ENCODE measurements at regions of chr11 and their contacts with region 1.

Region 1: GRCh38 chr11:9250139-9250582 is 15.0 kb downstream of the DENND5A start:
- DNase-seq: no peak
- ATAC-seq: no peak
- H3K4me3 ChIP-seq: no peak overlapping the region
- H3K27ac ChIP-seq: peak overlapping the region in 4 of 12 donors; percentile 0 to 79 (median 32)
- H3K4me1 ChIP-seq: peaks cover 6 to 76% (median 42%) of the 10 kb centered on the region in 12 donors
- H3K27me3 ChIP-seq: no peaks in the 10 kb centered on the region
- CTCF ChIP-seq: no peak
- POLR2A ChIP-seq: no peak

Region 2: DNA sequence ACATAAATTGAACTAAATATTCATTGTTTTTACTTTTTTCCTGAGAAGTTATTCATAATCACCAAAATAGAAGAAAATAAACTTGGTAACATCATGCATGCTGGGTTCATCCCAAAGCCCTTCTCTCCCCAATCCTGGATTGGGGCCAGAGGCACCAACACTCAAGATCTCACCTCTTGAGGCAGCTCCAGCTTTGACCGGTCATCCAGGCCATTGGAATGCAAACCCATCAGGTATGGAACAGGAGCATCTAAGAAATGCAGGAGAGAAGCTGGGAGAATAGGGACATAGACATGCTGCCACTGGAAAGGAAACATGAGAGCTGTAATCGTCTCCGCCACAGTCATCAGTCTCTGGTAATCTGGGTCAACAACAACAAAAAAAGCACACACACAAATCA is 56.8 kb before region 1 on chr11:
- intact Hi-C with region 1: no loop called
- DNase-seq: no peak
- ATAC-seq: no peak
- H3K4me3 ChIP-seq: no peak overlapping the region
- H3K27ac ChIP-seq: no peak overlapping the region
- H3K4me1 ChIP-seq: peaks cover 0 to 10% (median 0%) of the 10 kb centered on the region in 12 donors
- H3K27me3 ChIP-seq: no peaks in the 10 kb centered on the region
- CTCF ChIP-seq: no peak
- POLR2A ChIP-seq: no peak

Region 3: GRCh38 chr11:9219572-9219971 is 30.6 kb before region 1 on chr11:
- intact Hi-C with region 1: loop called in 1 of 10 experiments (anchors 5 kb)
- DNase-seq: no peak
- ATAC-seq: peak in 2 of 4 donors; percentile 55 to 60
- H3K4me3 ChIP-seq: no peak overlapping the region
- H3K27ac ChIP-seq: peak overlapping the region in 7 of 12 donors; percentile 4 to 74 (median 47)
- H3K4me1 ChIP-seq: peaks cover 0 to 47% (median 15%) of the 10 kb centered on the region in 12 donors
- H3K27me3 ChIP-seq: no peaks in the 10 kb centered on the region
- CTCF ChIP-seq: no peak
- POLR2A ChIP-seq: no peak

Region 4: GRCh38 chr11:9498457-9499078 is 248.4 kb after region 1 on chr11:
- intact Hi-C with region 1: no loop called
- DNase-seq: no peak
- ATAC-seq: no peak
- H3K4me3 ChIP-seq: no peak overlapping the region
- H3K27ac ChIP-seq: no peak overlapping the region
- H3K4me1 ChIP-seq: no peaks in the 10 kb centered on the region
- H3K27me3 ChIP-seq: no peaks in the 10 kb centered on the region
- CTCF ChIP-seq: no peak
- POLR2A ChIP-seq: no peak